Heart right ventricle (tissue), 16 donors: ENCODE measurements at regions of chr15 and their contacts with region 1.

Region 1: GRCh38 chr15:57213862-57214261 is 162.4 kb upstream of the CGNL1 start:
- DNase-seq: peak in 1 of 2 donors; percentile 9
- ATAC-seq: peak; percentile 47 to 82 (median 76)
- H3K4me3 ChIP-seq: no peak overlapping the region
- H3K27ac ChIP-seq: no peak overlapping the region
- H3K4me1 ChIP-seq: peaks cover 3 to 56% (median 25%) of the 10 kb centered on the region in 9 donors
- H3K27me3 ChIP-seq: no peaks in the 10 kb centered on the region
- CTCF ChIP-seq: peak; percentile 39 to 79 (median 62)

Region 2: DNA sequence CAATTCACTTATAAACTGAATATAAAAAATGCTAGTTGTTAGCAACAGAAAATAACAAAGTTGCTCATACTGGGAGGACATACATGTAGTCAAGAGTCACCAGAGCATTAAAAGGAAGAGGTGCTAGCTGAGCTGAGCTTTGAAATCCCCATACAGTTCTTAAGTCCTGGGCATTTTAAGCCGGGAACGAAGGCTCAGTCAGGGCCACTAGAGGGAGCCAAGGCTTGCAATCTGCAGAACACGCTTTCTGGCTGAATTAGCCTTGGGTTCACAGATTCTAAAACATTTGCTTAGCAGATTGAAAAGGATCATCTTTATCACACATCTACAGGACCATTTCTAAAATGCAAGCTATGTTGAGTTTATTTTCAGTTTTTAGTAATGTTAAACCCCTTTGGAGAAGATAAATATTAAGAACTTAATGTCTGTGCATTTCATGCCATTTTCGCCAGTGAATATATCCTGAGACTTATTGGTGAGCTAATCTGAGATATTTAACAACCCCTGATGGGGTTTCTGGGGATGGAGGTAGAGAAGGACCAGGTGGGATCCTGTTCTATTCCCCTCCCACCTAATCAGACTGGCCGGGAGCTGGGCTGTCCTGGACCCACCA is 722.6 kb before region 1 on chr15:
- intact Hi-C with region 1: loop called in 4 of 10 experiments (anchors 10 kb)
- DNase-seq: peak; percentile 26 to 27
- ATAC-seq: peak in 3 of 8 donors; percentile 56 to 82 (median 69)
- H3K4me3 ChIP-seq: no peak overlapping the region
- H3K27ac ChIP-seq: no peak overlapping the region
- H3K4me1 ChIP-seq: no peaks in the 10 kb centered on the region
- H3K27me3 ChIP-seq: peaks cover 0 to 9% (median 0%) of the 10 kb centered on the region in 7 donors
- CTCF ChIP-seq: peak; percentile 51 to 91 (median 80)

Region 3: DNA sequence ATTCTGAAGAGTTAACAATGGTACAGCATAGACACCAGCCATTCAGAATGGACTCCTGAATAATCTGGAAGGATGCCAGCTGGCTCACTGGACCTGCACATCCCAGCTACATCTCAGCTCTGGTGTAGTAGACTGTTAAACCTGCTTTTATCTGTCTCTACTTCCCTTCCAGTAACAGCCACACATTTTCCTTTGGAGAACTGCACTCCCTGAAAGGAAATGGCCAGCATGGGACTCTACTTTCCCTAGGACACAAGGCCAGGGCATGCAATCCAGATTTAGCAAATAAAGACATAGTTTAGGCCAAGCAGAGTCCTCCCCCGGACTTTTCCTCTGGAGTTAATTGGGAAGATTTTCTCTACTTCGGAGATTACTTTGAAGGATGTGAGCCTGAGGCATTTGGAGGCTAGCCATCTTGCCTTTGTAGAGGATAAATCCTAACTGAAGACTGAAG is 378.1 kb before region 1 on chr15:
- intact Hi-C with region 1: loop called in 1 of 10 experiments (anchors 10 kb)
- DNase-seq: peak in 1 of 2 donors; percentile 48
- ATAC-seq: peak; percentile 17 to 81 (median 59)
- H3K4me3 ChIP-seq: no peak overlapping the region
- H3K27ac ChIP-seq: no peak overlapping the region
- H3K4me1 ChIP-seq: peaks cover 0 to 25% (median 15%) of the 10 kb centered on the region in 9 donors
- H3K27me3 ChIP-seq: no peaks in the 10 kb centered on the region
- CTCF ChIP-seq: no peak

Region 4: DNA sequence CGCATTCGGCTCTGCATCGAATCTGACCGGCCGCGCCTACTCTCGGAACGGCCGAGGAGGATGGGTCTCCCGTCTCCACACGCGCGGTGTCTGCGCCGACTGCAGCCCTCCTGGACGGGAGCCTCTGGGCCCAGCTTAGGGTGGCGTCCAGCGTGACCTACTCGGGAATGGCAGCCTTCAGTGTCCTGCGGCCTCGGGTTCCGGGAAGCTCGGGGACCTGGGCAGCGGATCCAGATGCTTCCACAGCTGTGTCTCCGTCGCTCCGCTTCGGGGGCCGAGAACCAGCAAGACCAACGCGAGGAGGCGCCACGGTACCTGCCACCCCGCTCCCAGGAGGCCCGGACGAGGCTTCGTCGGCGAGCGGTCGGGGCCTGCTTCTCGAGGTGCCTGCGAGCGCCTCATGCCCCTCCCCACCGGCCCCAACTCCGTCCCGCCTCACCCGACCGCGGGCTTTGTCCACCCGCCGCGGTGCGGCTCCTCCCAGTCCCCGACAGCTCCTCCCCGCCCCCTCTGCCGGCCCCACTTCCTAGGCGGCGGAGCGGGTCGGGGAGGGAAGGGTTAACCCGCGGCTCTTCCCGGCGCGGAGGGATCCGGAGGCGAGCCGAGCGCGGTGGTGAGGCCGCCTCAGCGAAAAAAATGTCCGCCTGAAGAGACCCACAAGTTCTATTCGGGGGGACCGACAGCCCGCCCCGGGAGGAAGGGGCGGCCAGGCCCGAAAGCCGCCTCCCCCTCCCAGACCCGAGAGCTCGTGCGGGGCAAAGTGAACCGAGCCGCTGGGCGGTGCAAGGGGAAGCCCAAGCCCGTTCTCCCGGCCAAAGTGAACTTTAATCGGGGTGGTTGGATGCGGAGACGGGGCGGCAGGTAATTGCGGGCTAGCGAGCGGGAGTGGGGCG is 295.6 kb before region 1 on chr15 and contains the start of gene TCF12:
- intact Hi-C with region 1: loop called in 8 of 10 experiments (anchors 5 to 10 kb)
- DNase-seq: peak; percentile 96
- ATAC-seq: peak; percentile 95 to 98 (median 97)
- H3K4me3 ChIP-seq: peak within 1 kb of the TSS; percentile 84 to 97 (median 91)
- H3K27ac ChIP-seq: peak within 1 kb of the TSS; percentile 93 to 98 (median 98)
- H3K4me1 ChIP-seq: peaks cover 3 to 68% (median 60%) of the 10 kb centered on the region in 9 donors
- H3K27me3 ChIP-seq: no peaks in the 10 kb centered on the region
- CTCF ChIP-seq: peak in 8 of 9 donors; percentile 22 to 67 (median 51)
- total RNA-seq, gene TCF12: 29.2 to 55.7 (median 39.4) TPM

Region 5: DNA sequence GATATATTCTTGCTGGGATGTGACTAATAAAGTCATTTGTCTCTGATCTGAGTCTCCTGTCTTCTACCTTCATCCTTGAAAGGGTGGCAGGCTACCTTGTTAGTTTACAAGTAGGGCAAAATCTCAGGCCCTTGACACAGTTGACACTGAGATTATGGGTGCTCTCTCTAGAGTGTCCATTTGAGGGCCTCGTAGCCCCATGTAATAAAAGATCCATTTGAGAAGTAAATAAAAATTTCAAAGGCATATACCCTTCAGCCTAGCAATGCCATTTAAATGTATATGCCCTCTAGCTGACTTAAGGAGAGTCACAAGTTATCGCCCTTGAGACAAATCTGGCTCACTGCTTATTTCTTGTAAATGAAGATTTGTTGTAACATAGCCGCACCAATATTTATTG is 196.8 kb before region 1 on chr15:
- intact Hi-C with region 1: loop called in 1 of 10 experiments (anchors 10 kb)
- DNase-seq: no peak
- ATAC-seq: no peak
- H3K4me3 ChIP-seq: no peak overlapping the region
- H3K27ac ChIP-seq: no peak overlapping the region
- H3K4me1 ChIP-seq: peaks cover 0 to 39% (median 16%) of the 10 kb centered on the region in 9 donors
- H3K27me3 ChIP-seq: no peaks in the 10 kb centered on the region
- CTCF ChIP-seq: peak in 4 of 9 donors; percentile 11 to 43 (median 28)

Region 6: DNA sequence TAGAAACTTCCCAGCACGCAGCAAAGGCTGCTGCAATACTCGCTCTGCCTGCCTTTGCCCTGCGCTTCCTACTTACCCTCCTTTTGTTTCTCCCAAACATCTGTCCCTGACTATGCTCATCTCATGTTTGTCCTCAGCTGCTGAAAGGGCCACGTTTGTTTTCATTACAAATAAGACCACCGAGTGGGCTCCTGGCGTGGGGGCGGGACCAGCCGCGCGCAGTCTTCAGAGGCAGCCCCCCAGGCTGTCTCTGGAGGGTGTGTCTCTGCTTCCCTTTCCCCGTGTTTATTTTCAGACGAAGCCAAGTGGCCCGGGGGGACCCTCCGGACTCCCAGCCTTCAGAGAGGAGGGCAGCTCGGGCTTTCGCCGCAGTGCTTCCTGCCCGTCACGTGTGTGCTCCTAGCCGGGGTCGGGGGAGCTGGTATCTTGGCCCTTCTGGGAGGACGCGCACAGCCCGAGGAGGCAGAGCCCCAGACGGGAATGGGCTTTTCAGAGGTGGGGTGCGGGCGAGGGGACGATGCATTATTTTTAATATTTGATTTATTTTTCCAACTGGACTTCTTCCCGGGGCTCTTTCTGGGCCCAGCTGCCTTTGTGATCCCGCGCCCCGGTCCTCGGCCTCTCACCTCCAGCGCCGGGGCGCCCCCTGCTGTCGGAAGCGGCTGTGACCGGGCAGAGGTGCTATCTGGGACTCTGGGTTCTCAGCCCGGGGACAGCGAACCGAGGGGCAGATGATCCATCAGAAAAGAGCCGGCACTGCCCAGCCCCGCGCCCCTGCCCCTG is 92.5 kb after region 1 on chr15:
- intact Hi-C with region 1: loop called in 1 of 10 experiments (anchors 10 kb)
- DNase-seq: peak; percentile 87 to 92
- ATAC-seq: peak; percentile 88 to 95 (median 91)
- H3K4me3 ChIP-seq: peak overlapping the region; percentile 19 to 84 (median 58)
- H3K27ac ChIP-seq: peak overlapping the region in 6 of 10 donors; percentile 30 to 54 (median 34)
- H3K4me1 ChIP-seq: peaks cover 0 to 18% (median 12%) of the 10 kb centered on the region in 9 donors
- H3K27me3 ChIP-seq: no peaks in the 10 kb centered on the region
- CTCF ChIP-seq: peak; percentile 82 to 96 (median 91)

Region 7: GRCh38 chr15:57323806-57324589 is 110.1 kb after region 1 on chr15:
- intact Hi-C with region 1: no loop called
- DNase-seq: no peak
- ATAC-seq: no peak
- H3K4me3 ChIP-seq: no peak overlapping the region
- H3K27ac ChIP-seq: no peak overlapping the region
- H3K4me1 ChIP-seq: peaks cover 0 to 20% (median 9%) of the 10 kb centered on the region in 9 donors
- H3K27me3 ChIP-seq: no peaks in the 10 kb centered on the region
- CTCF ChIP-seq: no peak